Esophagus muscularis mucosa (tissue), 4 donors: ENCODE measurements at regions of chr10 and their contacts with region 1.

Region 1: DNA sequence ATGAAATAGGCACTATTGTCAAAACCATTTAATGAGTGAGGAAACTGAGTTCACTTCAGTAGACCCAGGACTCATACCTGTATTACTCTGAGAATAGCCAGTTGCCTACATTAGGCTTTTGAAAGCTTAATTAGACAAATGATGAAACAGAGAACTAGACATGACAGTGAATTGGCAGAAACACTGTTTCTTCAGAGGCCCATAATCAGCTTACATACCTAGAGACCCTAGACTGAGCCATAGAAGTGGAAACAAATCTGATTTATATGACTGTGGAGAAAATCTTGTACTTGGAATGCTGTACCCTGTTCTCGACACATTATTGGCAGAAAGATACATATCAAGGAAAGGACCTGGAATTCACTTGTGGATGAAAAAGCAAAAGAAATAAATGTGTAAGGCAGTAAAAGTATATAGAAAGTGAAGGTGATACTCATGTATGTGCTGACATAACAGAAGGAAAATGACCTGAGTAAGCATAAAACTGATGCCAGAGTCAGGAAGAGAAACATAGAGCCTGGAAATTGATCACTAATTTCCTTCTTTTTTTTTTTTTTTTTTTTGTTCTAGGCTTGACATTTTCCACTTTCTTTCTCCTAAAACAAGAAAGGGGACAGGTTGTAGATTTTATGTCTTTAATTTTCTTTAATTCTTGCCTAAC is 251.5 kb downstream of the BICC1 start:
- DNase-seq: no peak
- H3K4me3 ChIP-seq: no peak overlapping the region
- H3K27ac ChIP-seq: no peak overlapping the region
- H3K4me1 ChIP-seq: peaks cover 0 to 17% (median 14%) of the 10 kb centered on the region in 4 donors
- H3K27me3 ChIP-seq: no peaks in the 10 kb centered on the region
- CTCF ChIP-seq: no peak
- EP300 ChIP-seq: no peak
- POLR2A ChIP-seq: no peak

Region 2: DNA sequence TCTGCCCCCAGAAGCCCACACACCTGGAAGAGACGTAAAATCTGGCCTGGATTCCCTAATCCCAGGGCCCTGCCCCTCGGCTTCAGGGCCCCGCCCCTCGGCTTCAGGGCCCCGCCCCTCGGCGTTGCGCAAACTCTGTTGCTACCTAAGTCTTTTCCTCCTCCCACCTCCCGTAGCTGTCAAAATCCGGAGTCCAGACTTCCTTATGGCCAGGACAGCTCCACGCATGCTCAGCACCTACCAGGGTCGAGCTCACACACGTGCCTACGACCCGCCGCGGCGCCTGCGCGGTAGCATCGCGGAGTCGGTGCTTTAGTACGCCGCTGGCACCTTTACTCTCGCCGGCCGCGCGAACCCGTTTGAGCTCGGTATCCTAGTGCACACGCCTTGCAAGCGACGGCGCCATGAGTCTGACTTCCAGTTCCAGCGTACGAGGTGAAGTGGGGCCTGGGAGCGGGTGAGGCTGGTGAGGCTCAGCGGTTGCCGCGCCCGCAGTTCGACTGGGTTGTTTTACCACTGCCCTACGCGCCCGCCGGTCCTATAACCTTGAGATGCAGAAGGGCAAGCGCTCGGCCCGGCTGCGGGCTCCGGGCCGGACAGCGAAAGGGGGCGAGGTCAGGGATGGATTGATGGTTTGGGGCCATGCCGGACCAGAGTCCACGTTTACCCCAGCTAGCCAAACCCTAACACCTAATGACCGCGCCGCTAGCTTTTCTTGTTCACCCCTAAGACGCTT is 495.2 kb before region 1 on chr10 and contains the start of gene CISD1:
- intact Hi-C with region 1: loop called (anchors 5 kb)
- DNase-seq: peak; percentile 99
- H3K4me3 ChIP-seq: peak within 1 kb of the TSS; percentile 81 to 89 (median 84)
- H3K27ac ChIP-seq: peak within 1 kb of the TSS; percentile 93 to 98 (median 98)
- H3K4me1 ChIP-seq: peaks cover 13 to 45% (median 39%) of the 10 kb centered on the region in 4 donors
- H3K27me3 ChIP-seq: no peaks in the 10 kb centered on the region
- CTCF ChIP-seq: no peak
- EP300 ChIP-seq: no peak
- POLR2A ChIP-seq: peak; percentile 63
- total RNA-seq, gene CISD1: 30.8 to 46.3 (median 33.0) TPM

Region 3: DNA sequence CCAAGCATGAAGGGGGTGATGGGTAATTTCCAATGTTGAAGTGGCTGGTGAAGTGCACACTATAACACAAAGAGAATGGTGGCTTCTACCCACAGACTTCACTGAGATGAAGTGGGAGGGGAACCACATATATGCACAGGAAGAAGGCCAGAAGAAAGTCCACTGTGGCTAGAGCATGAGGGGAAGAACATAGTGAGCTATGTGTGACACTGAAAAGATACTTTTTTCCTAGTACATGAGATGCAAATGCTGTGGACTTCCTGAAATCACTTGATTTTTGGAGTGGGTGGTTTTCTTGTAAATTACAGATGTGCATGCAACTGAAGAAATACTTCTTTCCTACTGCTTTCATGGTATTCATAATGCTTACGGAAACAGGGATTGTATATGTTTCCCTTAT is 296.6 kb after region 1 on chr10:
- intact Hi-C with region 1: no loop called
- DNase-seq: no peak
- H3K4me3 ChIP-seq: no peak overlapping the region
- H3K27ac ChIP-seq: no peak overlapping the region
- H3K4me1 ChIP-seq: no peaks in the 10 kb centered on the region
- H3K27me3 ChIP-seq: no peaks in the 10 kb centered on the region
- CTCF ChIP-seq: no peak
- EP300 ChIP-seq: no peak
- POLR2A ChIP-seq: no peak